B cell (primary cell): ENCODE measurements at regions of chr12 and their contacts with region 1.

Region 1: DNA sequence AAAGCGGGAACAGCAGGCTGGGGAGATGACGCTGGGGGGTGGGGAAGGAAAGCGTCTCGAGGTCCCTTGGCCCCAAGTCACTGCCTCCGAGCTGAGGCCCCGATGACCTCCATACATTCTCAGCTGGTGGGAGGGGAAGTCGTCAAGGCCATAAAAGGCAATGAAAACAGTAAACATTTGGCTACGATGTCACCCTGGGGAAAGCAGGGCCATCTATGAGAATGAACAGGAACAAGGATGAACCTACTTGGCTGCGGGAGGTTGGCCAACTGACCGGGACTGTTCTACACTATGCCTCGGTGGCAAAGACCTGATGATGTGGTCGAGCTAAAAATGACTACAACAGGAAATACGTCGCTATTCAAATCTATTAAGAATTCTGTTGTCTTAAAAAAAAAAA is 19.5 kb downstream of the PRKAB1 start:
- DNase-seq: no peak
- ATAC-seq: no peak
- H3K4me3 ChIP-seq: no peak overlapping the region
- H3K4me3 Mint-ChIP-seq: no peak overlapping the region
- H3K27ac ChIP-seq: no peak overlapping the region
- H3K27ac Mint-ChIP-seq: no peak overlapping the region
- H3K4me1 ChIP-seq: peaks cover 9 to 16% of the 10 kb centered on the region in 2 donors
- H3K4me1 Mint-ChIP-seq: peaks cover 29% of the 10 kb centered on the region
- H3K27me3 ChIP-seq: no peaks in the 10 kb centered on the region
- H3K27me3 Mint-ChIP-seq: no peaks in the 10 kb centered on the region
- CTCF ChIP-seq: no peak

Region 2: GRCh38 chr12:120145164-120145563 is 457.8 kb after region 1 on chr12:
- CTCF ChIA-PET with region 1: no interaction called
- POLR2A ChIA-PET with region 1: interaction called, 10 read pairs
- intact Hi-C with region 1: no loop called
- DNase-seq: no peak
- ATAC-seq: no peak
- H3K4me3 ChIP-seq: no peak overlapping the region
- H3K4me3 Mint-ChIP-seq: no peak overlapping the region
- H3K27ac ChIP-seq: no peak overlapping the region
- H3K27ac Mint-ChIP-seq: no peak overlapping the region
- H3K4me1 ChIP-seq: no peaks in the 10 kb centered on the region
- H3K4me1 Mint-ChIP-seq: no peaks in the 10 kb centered on the region
- H3K27me3 ChIP-seq: no peaks in the 10 kb centered on the region
- H3K27me3 Mint-ChIP-seq: no peaks in the 10 kb centered on the region
- CTCF ChIP-seq: no peak

Region 3: DNA sequence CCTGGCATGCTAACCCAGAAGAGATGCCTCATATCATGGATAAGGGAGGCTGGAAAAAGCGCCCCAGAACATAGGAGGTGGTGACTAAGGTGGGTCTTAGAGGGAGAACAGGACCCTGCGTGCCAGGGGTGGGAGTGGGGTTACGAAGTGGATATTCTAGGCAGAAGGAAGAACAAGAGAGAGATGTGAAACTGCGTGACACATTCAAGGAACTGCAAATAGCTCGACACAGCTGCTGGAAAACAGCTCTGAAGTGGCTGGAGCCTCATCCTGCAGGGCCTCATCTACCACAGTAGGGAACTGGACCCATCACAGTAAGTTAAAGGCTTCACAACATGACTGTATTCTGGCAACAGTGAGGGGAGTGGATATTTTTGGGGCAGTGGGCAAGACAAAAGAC is 1773.6 kb after region 1 on chr12:
- CTCF ChIA-PET with region 1: no interaction called
- POLR2A ChIA-PET with region 1: no interaction called
- intact Hi-C with region 1: no loop called
- DNase-seq: no peak
- ATAC-seq: no peak
- H3K4me3 ChIP-seq: no peak overlapping the region
- H3K4me3 Mint-ChIP-seq: no peak overlapping the region
- H3K27ac ChIP-seq: no peak overlapping the region
- H3K27ac Mint-ChIP-seq: peak overlapping the region; percentile 42
- H3K4me1 ChIP-seq: peaks cover 20 to 47% of the 10 kb centered on the region in 2 donors
- H3K4me1 Mint-ChIP-seq: peaks cover 55% of the 10 kb centered on the region
- H3K27me3 ChIP-seq: no peaks in the 10 kb centered on the region
- H3K27me3 Mint-ChIP-seq: no peaks in the 10 kb centered on the region
- CTCF ChIP-seq: no peak